ENCODE measurements at regions of chr1 and their contacts with region 1.

Region 1: GRCh38 chr1:214123061-214123784 is 135.4 kb downstream of the PROX1 start:
- DNase-seq: peak; percentile 72 to 78
- ATAC-seq: peak; percentile 95 to 99
- H3K4me3 ChIP-seq: no peak overlapping the region
- H3K27ac ChIP-seq: no peak overlapping the region
- H3K4me1 ChIP-seq: 0 out of 3 replicates have a peak, but pooled peaks cover 4% of the 10 kb centered on the region
- CTCF ChIP-seq: peak; percentile 69
- EP300 ChIP-seq: no peak
- POLR2A ChIP-seq: no peak
- RAD21 ChIP-seq: peak; percentile 88 to 91

Region 2: DNA sequence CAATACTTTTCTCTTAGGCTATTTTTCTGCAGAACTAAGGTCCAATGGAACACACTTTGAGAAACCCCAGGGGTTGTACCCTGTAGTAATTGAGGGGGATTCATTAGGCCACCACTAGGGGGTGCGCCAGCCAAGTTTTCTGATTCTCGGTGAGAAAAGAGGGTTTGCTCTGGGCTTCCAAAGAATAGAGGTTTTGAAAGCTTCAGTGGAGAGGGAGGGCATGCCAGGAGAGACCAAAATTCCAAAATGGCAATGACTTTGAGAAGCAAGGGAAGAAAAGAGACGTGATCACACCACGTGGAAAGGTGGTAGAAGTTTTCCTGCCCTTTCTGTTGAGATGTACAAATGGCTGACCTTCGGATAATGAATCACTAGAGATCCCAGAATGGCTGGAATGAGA is 748.9 kb before region 1 on chr1:
- CTCF ChIA-PET with region 1: interaction called, 24 read pairs
- POLR2A ChIA-PET with region 1: no interaction called
- DNase-seq: peak; percentile 51 to 76
- ATAC-seq: peak; percentile 82 to 93; a peak in 5 of 6 replicates
- H3K4me3 ChIP-seq: no peak overlapping the region
- H3K27ac ChIP-seq: no peak overlapping the region
- H3K4me1 ChIP-seq: no peaks in the 10 kb centered on the region
- CTCF ChIP-seq: peak; percentile 84
- EP300 ChIP-seq: no peak
- POLR2A ChIP-seq: no peak
- RAD21 ChIP-seq: peak; percentile 80 to 81

Region 3: DNA sequence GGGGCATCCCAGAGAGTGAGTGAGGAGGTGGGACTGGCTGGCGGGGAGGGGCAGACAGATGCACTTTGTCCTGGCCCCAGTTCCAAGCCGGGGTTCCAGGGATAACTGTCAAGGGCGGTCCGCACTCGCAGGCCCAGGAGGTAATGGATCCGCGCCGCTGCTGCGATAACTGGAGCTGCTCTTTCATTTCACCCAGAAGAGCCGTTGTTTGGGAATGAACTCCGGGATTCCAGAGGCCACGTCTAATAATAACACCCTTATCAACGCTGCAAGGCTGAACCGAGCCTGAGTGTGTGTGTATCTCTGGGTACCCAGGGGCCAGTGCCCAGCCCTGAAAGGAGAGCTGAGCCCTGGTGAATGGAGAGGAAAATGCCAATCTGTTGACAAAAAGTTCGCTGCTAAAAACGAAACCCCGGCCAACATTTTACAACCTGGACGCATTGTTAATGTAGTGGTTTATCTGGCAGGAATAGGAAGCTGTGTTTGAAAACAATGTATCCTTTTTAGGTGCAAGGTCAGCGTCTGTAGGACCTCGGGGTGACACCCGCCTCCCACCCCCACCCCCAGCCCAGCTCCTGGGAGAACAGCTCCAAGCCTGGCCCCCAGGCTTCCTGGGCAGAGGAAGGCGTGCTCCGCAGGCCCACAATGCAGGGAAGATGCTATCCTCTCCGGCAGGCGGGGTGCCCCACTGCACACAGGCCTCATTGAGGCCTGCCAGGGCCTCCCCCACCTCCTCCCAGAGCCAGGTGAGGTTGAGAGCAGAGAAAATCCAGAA is 15.7 kb before region 1 on chr1:
- CTCF ChIA-PET with region 1: interaction called, 19 read pairs
- POLR2A ChIA-PET with region 1: interaction called, 4 read pairs
- DNase-seq: no peak
- ATAC-seq: no peak
- H3K4me3 ChIP-seq: no peak overlapping the region
- H3K27ac ChIP-seq: no peak overlapping the region
- H3K4me1 ChIP-seq: peaks cover 9% of the 10 kb centered on the region; the same call in 1 of the 3 replicates
- CTCF ChIP-seq: no peak
- EP300 ChIP-seq: no peak
- POLR2A ChIP-seq: no peak
- RAD21 ChIP-seq: no peak

Measured in A549 (cell line).